ENCODE measurements at regions of chr17 and their contacts with region 1.

Region 1: GRCh38 chr17:20095336-20096080 is 86.3 kb downstream of the SPECC1 start:
- DNase-seq: peak in 1 of 3 donors; percentile 38
- ATAC-seq: no peak
- H3K4me3 ChIP-seq: no peak overlapping the region
- H3K4me1 ChIP-seq: no peaks in the 10 kb centered on the region
- CTCF ChIP-seq: no peak

Region 2: GRCh38 chr17:20009302-20010098 is 86.0 kb before region 1 on chr17 and contains the start of gene SPECC1:
- intact Hi-C with region 1: loop called in 1 of 2 experiments (anchors 10 kb)
- DNase-seq: peak; percentile 81 to 89 (median 85)
- ATAC-seq: peak; percentile 100
- H3K4me3 ChIP-seq: peak within 1 kb of the TSS; percentile 5
- H3K4me1 ChIP-seq: peaks cover 7% of the 10 kb centered on the region
- CTCF ChIP-seq: peak; percentile 99
- total RNA-seq, gene SPECC1: 36.2 to 86.3 (median 85.7) TPM